MCF 10A (cell line): ENCODE measurements at regions of chr1 and their contacts with region 1.

Region 1: DNA sequence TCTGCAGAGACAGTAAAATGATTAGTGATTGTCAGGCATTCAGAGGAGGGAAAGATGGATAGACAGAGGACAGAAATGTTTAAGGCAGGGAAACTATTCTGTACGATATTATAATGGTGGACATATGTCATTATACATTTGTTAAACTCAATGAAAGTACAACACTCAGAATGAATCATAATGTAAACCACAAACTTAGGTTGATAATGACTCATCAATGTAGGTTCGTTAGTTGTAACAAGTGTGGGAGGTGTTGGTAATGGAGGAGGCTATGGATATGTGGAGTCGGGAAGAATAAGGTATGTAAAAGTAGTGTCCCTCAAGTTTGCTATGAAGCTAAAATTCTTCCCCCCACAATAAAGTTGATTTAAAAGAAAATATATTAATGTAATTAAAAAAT is 455.0 kb downstream of the BRINP3 start:
- DNase-seq: peak; percentile 91
- H3K4me3 Mint-ChIP-seq: no peak overlapping the region
- H3K27ac Mint-ChIP-seq: no peak overlapping the region
- H3K4me1 Mint-ChIP-seq: peaks cover 8% of the 10 kb centered on the region
- H3K27me3 Mint-ChIP-seq: no peaks in the 10 kb centered on the region
- CTCF ChIP-seq: no peak

Region 2: DNA sequence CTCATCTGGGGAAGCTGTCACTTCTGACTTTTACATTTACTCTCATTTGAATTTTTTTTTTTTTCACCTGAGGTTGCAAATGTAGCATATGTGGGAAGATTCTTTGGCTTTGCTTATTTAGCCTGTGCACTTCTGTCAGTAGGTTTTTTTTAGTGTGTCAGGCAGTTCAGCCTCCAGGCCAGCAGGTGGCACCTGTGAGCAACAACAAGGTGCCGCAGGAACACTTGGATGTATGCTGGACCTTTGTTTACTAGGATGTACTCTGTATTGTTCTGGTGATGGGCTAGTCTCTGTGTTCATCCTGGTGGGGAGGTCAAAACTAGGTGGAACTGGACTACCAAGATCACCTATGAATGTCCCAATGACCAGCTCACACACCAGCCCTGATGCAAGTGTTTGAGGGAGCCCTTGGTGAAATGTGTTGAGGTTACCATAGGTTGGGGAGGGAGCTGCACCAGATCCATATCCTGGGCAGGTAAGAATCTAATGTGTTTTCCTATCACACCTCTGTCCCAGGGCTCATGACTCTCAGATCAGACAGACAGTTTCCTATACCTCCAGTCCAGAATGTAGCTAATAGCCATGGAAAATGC is 163.2 kb before region 1 on chr1:
- CTCF ChIA-PET with region 1: no interaction called
- POLR2A ChIA-PET with region 1: no interaction called
- intact Hi-C with region 1: loop called (anchors 10 kb)
- DNase-seq: no peak
- H3K4me3 Mint-ChIP-seq: no peak overlapping the region
- H3K27ac Mint-ChIP-seq: no peak overlapping the region
- H3K4me1 Mint-ChIP-seq: peaks cover 1% of the 10 kb centered on the region
- H3K27me3 Mint-ChIP-seq: no peaks in the 10 kb centered on the region
- CTCF ChIP-seq: peak; percentile 76